ENCODE measurements at regions of chr2 and their contacts with region 1.

Region 1: DNA sequence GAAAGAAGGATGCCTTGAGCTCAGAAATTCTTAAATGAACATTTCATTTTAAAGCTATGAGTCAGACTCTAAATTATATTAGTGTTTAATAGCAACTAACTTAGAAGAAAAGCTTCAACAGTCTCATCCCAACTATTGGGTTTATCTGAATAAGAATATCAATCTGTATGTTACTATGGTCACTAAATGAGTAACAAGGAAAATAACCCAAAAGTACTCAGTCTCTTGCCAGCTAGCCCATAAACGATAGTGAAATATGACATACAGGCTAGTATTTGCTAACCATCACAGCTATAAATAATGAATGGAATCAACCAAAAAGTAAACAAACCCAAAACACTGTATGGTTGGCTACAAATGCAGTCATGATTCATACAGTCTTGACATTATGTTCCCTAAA is 174.9 kb downstream of the RAB3GAP1 start:
- DNase-seq: no peak
- ATAC-seq: no peak
- H3K4me3 ChIP-seq: no peak overlapping the region
- H3K4me3 Mint-ChIP-seq: no peak overlapping the region
- H3K27ac ChIP-seq: no peak overlapping the region
- H3K27ac Mint-ChIP-seq: no peak overlapping the region
- H3K4me1 ChIP-seq: no peaks in the 10 kb centered on the region
- H3K4me1 Mint-ChIP-seq: no peaks in the 10 kb centered on the region
- H3K27me3 ChIP-seq: no peaks in the 10 kb centered on the region
- H3K27me3 Mint-ChIP-seq: no peaks in the 10 kb centered on the region
- CTCF ChIP-seq: no peak

Region 2: GRCh38 chr2:134368009-134368817 is 858.7 kb before region 1 on chr2:
- CTCF ChIA-PET with region 1: no interaction called
- POLR2A ChIA-PET with region 1: no interaction called
- intact Hi-C with region 1: loop called in 1 of 2 experiments (anchors 5 kb)
- DNase-seq: peak in 1 of 9 experiments; percentile 8
- ATAC-seq: no peak
- H3K4me3 ChIP-seq: no peak overlapping the region
- H3K4me3 Mint-ChIP-seq: no peak overlapping the region
- H3K27ac ChIP-seq: no peak overlapping the region
- H3K27ac Mint-ChIP-seq: peak overlapping the region; percentile 58
- H3K4me1 ChIP-seq: peaks cover 15% of the 10 kb centered on the region
- H3K4me1 Mint-ChIP-seq: peaks cover 39% of the 10 kb centered on the region
- H3K27me3 ChIP-seq: no peaks in the 10 kb centered on the region
- H3K27me3 Mint-ChIP-seq: no peaks in the 10 kb centered on the region
- CTCF ChIP-seq: no peak